Posterior vena cava (tissue), 2 donors: ENCODE measurements at regions of chr20 and their contacts with region 1.

Region 1: GRCh38 chr20:41173161-41173721 is 35.9 kb downstream of the PLCG1 start:
- DNase-seq: peak; percentile 95

Region 2: GRCh38 chr20:40090236-40090635 is 1083.0 kb before region 1 on chr20:
- intact Hi-C with region 1: loop called in 1 of 2 experiments (anchors 5 kb)
- DNase-seq: no peak

Region 3: GRCh38 chr20:41232973-41233926 is 60.0 kb after region 1 on chr20:
- intact Hi-C with region 1: loop called (anchors 5 kb)
- DNase-seq: no peak

Region 4: GRCh38 chr20:41317536-41318270 is 144.5 kb after region 1 on chr20 and contains the start of gene ZHX3:
- intact Hi-C with region 1: no loop called
- DNase-seq: peak; percentile 99
- total RNA-seq, gene ZHX3: 88.2 to 92.9 TPM

Region 5: GRCh38 chr20:41339507-41340326 is 166.5 kb after region 1 on chr20:
- intact Hi-C with region 1: loop called (anchors 1 to 5 kb)
- DNase-seq: peak; percentile 95

Region 6: GRCh38 chr20:41411391-41411847 is 238.2 kb after region 1 on chr20:
- intact Hi-C with region 1: loop called in 1 of 2 experiments (anchors 10 kb)
- DNase-seq: no peak